ENCODE measurements at regions of chr4 and their contacts with region 1.

Region 1: GRCh38 chr4:152850377-152850776 is 70.6 kb downstream of the ARFIP1 start:
- DNase-seq: peak; percentile 17
- ATAC-seq: no peak
- H3K4me3 ChIP-seq: no peak overlapping the region
- H3K27ac ChIP-seq: no peak overlapping the region
- H3K4me1 ChIP-seq: no peaks in the 10 kb centered on the region; the same call in 1 of the 2 replicates
- H3K27me3 ChIP-seq: no peaks in the 10 kb centered on the region
- CTCF ChIP-seq: no peak

Region 2: DNA sequence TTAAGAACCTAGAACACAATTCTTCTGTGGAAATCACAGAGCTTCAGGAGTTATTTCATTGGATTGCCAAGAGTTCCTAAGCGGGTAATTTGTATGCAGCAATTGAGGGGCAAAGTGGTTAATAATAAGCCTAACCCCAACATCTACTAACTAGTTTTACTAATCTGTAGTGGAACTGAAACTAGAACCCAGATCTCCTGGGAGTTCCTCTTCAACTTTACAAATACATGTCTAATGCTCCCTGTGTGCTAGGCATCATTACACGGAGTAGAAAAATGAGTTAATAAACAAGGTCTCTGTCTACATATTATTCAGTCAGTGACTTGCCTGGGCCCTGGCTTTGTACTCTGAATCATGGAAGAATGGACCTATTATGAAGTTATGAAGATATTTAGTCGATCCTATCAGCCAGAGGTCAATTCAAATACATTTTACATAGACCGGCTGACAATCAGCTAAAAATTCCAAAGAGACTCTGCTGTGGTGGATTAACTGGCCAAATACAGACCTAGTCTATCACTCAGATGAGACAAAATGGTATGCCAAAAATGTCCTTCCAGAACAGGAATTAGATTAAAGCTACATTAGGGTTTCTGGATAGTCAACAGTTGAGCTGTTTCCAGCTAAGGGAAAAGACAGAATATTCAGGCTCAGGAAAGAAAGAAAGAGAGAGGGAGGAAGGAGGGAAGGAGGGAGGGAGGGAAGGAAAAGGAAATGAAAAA is 640.4 kb before region 1 on chr4:
- CTCF ChIA-PET with region 1: interaction called, 13 read pairs
- POLR2A ChIA-PET with region 1: no interaction called
- in situ Hi-C with region 1: no loop called
- intact Hi-C with region 1: no loop called
- DNase-seq: no peak
- ATAC-seq: no peak
- H3K4me3 ChIP-seq: no peak overlapping the region
- H3K27ac ChIP-seq: no peak overlapping the region
- H3K4me1 ChIP-seq: no peaks in the 10 kb centered on the region
- H3K27me3 ChIP-seq: no peaks in the 10 kb centered on the region
- CTCF ChIP-seq: no peak